ENCODE measurements at regions of chr19 and their contacts with region 1.

Region 1: DNA sequence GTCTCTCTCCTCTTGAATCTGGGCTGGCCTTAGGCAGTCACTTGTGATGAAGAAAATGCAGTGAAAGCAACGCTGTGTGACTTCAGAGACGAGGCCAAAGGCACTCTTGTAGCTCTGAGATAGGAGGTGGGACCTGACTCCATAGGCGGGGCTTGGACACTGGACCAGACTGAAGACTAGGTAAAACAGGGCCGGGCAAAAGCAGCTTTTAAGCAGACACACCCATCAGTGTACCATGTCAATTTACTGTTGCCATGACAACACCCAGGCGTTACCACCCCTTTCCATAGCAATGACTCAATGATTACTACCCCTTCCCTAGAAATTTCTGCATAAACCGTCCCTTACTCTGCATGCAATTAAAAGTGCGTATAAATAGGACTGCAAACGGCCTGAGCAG is 6.6 kb upstream of the EID2 start:
- DNase-seq: peak; percentile 34
- H3K4me3 Mint-ChIP-seq: no peak overlapping the region
- H3K27ac Mint-ChIP-seq: no peak overlapping the region
- H3K4me1 Mint-ChIP-seq: peaks cover 41% of the 10 kb centered on the region
- H3K27me3 Mint-ChIP-seq: no peaks in the 10 kb centered on the region

Region 2: DNA sequence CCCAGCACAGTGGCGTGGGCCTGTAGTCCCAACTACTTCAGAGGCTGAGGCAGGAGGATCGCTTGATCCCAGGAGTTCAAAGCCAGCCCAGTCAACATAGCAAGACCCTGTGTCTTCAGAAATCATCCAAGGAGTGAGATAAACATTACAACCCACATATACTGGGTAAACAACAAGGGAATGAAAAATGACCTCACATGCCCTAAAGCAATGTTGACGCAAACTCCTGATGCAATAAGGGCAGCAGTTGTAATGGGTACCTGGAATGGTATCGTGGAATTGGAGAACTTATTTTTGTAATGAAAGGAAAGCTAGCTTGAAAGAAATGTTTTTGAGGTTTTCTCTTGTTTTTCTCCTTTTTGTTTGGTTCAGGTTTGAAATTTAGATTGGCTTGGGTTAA is 84.6 kb after region 1 on chr19:
- CTCF ChIA-PET with region 1: interaction called, 18 read pairs
- POLR2A ChIA-PET with region 1: no interaction called
- intact Hi-C with region 1: loop called (anchors 2 kb)
- DNase-seq: no peak
- H3K4me3 Mint-ChIP-seq: no peak overlapping the region
- H3K27ac Mint-ChIP-seq: no peak overlapping the region
- H3K4me1 Mint-ChIP-seq: no peaks in the 10 kb centered on the region
- H3K27me3 Mint-ChIP-seq: peaks cover 15% of the 10 kb centered on the region

Measured in activated CD4-positive, alpha-beta memory T cell treated with anti-CD3 and anti-CD28 coated beads for 36 hours (primary cell).